ENCODE measurements at regions of chr19 and their contacts with region 1.

Region 1: GRCh38 chr19:42176990-42177685 is 40.3 kb downstream of the DEDD2 start:
- DNase-seq: no peak
- H3K4me3 ChIP-seq: peak overlapping the region; percentile 60
- CTCF ChIP-seq: peak; percentile 68

Region 2: GRCh38 chr19:42158926-42159325 is 18.2 kb before region 1 on chr19:
- CTCF ChIA-PET with region 1: interaction called, 21 read pairs
- POLR2A ChIA-PET with region 1: no interaction called
- DNase-seq: no peak
- H3K4me3 ChIP-seq: no peak overlapping the region
- CTCF ChIP-seq: no peak

Region 3: GRCh38 chr19:42166316-42166715 is 10.8 kb before region 1 on chr19:
- CTCF ChIA-PET with region 1: interaction called, 21 read pairs
- POLR2A ChIA-PET with region 1: no interaction called
- DNase-seq: no peak
- H3K4me3 ChIP-seq: no peak overlapping the region
- CTCF ChIP-seq: no peak

Region 4: GRCh38 chr19:42191855-42192254 is 14.7 kb after region 1 on chr19:
- CTCF ChIA-PET with region 1: interaction called, 16 read pairs
- POLR2A ChIA-PET with region 1: no interaction called
- DNase-seq: no peak
- H3K4me3 ChIP-seq: no peak overlapping the region
- CTCF ChIP-seq: no peak

Region 5: DNA sequence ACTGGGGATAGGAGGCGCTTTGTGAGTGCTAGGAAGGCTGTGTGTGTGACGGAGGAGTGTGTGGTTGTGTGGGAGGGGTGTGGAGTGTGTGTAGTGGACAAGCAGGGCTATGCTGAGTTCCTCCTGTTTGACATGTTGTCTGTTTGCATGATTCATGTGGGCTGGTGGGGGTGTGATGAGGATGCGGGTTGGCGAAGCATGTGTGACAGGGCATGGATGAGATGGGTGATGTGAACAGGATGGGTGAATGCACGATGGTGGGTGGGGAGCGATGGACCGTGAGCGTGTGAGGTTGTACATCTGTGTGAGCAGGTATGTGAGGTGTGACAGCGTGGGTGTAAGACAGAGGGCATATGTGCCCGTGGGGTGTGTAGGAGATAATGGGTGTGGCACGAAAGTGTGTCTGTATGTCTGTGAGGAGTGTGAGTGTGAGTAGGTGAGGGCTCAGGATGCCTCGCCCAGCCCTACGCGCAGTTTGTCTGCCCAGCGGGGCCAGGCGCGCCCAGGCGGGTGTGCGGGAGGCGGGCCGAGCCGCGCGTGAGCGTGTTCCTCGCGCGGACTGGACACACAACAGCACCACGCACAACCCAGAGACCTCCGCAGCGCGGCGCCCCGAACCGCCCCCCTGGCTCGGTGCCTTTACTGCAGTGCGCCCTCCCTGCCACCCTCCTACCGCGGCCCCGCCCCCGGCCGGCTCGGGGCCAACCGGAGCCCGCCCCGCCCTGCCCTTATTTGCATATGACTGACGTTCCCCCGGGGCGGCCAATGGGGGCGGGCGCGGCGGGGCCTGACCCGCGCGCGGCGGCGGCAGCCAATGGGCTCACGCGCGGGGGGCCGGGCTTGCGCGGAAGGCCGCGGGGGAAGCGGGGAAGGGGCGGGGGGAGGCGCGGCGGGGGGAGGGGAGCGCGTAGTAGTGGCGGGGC is 106.3 kb after region 1 on chr19:
- CTCF ChIA-PET with region 1: no interaction called
- POLR2A ChIA-PET with region 1: no interaction called
- DNase-seq: no peak
- H3K4me3 ChIP-seq: peak overlapping the region; percentile 69
- CTCF ChIP-seq: no peak

Measured in AG04449 (cell line).